Activated CD4-positive, alpha-beta T cell treated with anti-CD3 and anti-CD28 coated beads, Interleukin-2, amount 10 ng/mL, durations not matched to agents 24 days and 14 days (primary cell): ENCODE measurements at regions of chr16 and their contacts with region 1.

Region 1: DNA sequence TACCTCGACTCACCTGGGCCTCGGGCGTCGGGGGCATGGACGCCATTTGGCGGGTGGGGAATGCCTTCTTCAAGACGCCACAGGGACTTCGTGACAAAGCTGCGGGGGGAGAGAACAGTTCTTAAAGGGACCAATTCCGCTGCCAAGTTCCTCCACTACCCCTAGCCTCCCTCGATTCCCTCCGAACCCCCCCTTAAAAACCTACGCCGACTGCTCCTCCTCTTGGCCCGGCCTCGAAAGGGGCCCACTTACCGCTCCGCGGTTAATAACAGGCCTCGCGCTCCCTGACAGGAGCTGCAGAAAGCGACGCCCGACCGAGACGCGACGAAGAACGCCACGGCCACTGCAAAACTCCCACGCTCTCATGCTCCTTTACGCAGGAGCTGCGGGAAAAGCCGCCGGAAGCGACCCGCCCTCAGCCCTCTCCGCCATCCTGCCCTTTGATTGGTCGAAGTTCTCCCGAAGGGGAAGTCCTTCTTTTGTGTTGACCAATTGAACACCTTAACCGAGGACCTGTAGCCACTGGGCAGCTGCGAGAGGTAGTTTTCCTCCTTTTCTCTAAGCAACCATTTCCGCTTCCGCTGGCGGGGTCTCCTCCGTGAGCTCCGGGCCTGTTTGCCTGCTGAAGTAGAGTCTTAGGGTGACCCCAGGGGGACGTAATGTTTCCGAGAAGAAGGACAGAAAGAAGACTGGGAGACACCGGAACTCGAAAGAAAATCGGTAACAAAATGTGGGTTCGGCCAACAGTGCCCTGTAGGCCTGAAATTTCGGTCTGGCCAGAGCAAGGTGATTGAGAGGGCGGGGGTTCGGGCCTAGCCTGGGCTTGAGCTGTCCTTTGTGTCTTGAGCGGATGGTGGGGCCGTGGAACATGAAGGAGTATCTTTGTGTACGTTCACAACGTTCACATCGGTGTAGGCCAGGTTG is at the starts of genes NAA60 and ZNF597:
- DNase-seq: peak; percentile 94
- H3K4me3 Mint-ChIP-seq: peak within 1 kb of the TSS; percentile 90
- H3K27ac Mint-ChIP-seq: peak within 1 kb of the TSS; percentile 96
- H3K4me1 Mint-ChIP-seq: peaks cover 17% of the 10 kb centered on the region
- H3K27me3 Mint-ChIP-seq: no peaks in the 10 kb centered on the region
- total RNA-seq, gene NAA60: 31.4 and 34.7 TPM in 2 replicates
- total RNA-seq, gene ZNF597: 1.9 and 2.1 TPM in 2 replicates

Region 2: GRCh38 chr16:3400779-3401688 is 42.3 kb before region 1 on chr16 and contains the starts of genes ZNF174 and ZSCAN32:
- intact Hi-C with region 1: loop called (anchors 1 kb)
- DNase-seq: peak; percentile 100
- H3K4me3 Mint-ChIP-seq: peak within 1 kb of the TSS; percentile 90
- H3K27ac Mint-ChIP-seq: peak within 1 kb of the TSS; percentile 86
- H3K4me1 Mint-ChIP-seq: peaks cover 20% of the 10 kb centered on the region
- H3K27me3 Mint-ChIP-seq: no peaks in the 10 kb centered on the region
- total RNA-seq, gene ZNF174: 10.1 and 11.4 TPM in 2 replicates
- total RNA-seq, gene ZSCAN32: 16.8 and 17.9 TPM in 2 replicates

Region 3: GRCh38 chr16:3467921-3468320 is 24.6 kb after region 1 on chr16:
- intact Hi-C with region 1: no loop called
- DNase-seq: no peak
- H3K4me3 Mint-ChIP-seq: no peak overlapping the region
- H3K27ac Mint-ChIP-seq: no peak overlapping the region
- H3K4me1 Mint-ChIP-seq: peaks cover 29% of the 10 kb centered on the region
- H3K27me3 Mint-ChIP-seq: no peaks in the 10 kb centered on the region

Region 4: DNA sequence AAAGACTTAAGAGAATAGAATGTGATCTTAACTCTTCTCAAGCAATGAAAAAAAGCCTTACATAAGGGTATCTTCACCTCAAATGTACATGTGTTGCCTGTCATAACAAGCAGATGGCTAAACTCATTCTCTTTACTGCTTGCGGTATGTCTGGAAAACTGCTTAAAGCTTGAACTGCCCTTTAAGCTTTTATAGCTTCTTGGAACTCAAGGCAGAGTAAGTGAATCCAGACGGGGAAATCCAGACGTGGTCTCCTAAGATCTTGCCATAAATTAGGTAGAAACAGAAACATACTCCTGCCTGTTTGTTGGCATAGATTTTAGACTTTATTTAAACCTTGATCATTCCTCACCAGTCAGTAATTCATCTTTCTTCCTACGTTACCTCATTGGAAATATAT is 77.0 kb after region 1 on chr16:
- intact Hi-C with region 1: no loop called
- DNase-seq: no peak
- H3K4me3 Mint-ChIP-seq: no peak overlapping the region
- H3K27ac Mint-ChIP-seq: peak overlapping the region; percentile 41
- H3K4me1 Mint-ChIP-seq: peaks cover 12% of the 10 kb centered on the region
- H3K27me3 Mint-ChIP-seq: no peaks in the 10 kb centered on the region